Left ventricle myocardium superior (tissue), 1 donor: ENCODE measurements at regions of chr11 and their contacts with region 1.

Region 1: DNA sequence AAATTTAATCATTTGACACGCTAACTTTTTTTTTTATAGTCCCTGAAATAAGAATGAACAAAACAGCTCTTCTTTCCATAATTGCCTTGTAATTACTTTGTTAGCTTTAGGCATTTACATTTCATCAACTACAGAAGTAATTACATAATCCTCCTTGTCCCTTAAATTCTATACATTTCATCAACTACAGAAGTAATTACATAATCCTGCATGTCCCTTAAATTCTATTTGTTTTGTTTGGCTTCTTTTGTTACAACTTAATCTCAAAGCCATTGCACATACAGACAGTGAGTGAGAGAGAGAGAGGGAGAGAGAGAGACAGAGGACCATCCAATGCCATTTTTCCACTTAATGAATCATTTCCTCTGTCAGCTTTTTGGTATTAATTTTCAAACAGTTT is 873.2 kb downstream of the METTL15 start:
- DNase-seq: no peak
- ATAC-seq: no peak

Region 2: GRCh38 chr11:28961726-28962125 is 19.7 kb before region 1 on chr11:
- intact Hi-C with region 1: loop called (anchors 2 kb)
- DNase-seq: no peak
- ATAC-seq: no peak